ENCODE measurements at regions of chr14 and their contacts with region 1.

Region 1: DNA sequence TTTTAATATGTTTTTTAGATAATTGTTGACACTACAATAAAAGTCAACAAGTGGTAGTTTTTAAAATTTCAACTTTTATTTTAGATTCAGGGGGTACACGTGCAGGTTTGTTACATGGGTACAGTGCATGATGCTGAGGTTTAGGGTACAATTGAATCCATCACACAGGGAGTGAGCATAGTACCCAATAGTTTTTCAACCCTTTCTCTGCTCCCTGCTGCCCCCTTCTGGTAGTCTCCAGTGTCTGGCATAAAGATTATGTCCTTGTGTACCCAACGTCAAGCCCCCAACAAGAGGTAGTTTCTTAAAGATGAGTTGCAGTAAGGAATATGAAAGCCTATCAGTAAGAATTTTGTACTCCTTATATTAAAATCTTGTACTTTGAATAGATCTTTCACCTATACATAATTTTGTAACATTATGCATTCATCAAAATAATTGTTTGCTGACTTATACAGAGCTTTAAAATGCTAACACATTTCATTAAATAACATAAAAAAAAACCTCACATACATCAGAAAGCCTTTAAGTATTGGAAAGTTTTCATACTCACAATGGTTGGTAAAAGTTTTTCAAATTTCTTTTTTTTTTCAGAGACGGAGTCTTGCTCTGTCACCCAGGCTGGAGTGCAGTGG is 5.4 kb upstream of the RALGAPA1 start:
- DNase-seq: peak; percentile 85
- ATAC-seq: peak; percentile 89
- H3K4me3 Mint-ChIP-seq: no peak overlapping the region
- H3K27ac Mint-ChIP-seq: no peak overlapping the region
- H3K4me1 Mint-ChIP-seq: no peaks in the 10 kb centered on the region
- H3K27me3 Mint-ChIP-seq: peaks cover 3% of the 10 kb centered on the region

Region 2: DNA sequence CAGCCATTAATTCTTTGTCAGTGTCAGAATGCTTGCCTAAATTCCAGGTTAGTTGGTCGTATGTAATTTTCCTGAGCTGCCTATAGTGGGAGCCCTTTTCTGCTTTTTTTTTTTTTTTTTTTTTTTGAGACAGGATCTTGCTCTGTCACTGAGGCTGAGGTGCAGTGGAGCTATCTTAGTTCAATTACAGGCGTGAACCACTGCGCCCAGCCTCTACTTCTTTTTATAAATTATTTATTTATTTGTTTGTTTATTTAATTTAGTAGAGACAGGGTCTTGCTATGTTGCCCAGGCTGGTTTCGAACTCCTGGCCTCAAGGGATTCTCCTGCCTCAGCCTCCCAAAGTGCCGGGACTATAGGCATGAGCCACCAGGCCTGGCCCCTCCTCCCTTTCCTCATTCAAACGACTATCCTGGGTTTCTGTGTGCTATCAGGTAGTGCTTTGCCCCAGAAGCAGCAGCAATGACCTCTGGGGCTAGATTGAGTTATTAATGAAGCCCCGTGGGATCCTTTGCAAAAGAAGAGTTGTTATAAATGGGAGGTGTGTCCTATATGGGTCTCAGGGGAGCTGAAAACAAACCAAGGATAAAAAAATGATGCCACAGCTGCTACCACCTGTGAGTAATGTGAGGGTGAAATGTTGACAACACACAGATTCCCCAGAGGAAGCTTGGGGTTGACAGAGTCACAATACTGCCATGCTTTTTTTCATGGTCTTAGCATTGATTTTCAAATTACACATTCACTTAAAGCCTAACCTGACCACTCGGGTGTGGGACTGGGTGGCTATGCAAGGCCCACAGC is 375.4 kb before region 1 on chr14:
- CTCF ChIA-PET with region 1: interaction called, 20 read pairs
- DNase-seq: no peak
- ATAC-seq: no peak
- H3K4me3 Mint-ChIP-seq: no peak overlapping the region
- H3K27ac Mint-ChIP-seq: no peak overlapping the region
- H3K4me1 Mint-ChIP-seq: peaks cover 8% of the 10 kb centered on the region
- H3K27me3 Mint-ChIP-seq: peaks cover 4% of the 10 kb centered on the region

Region 3: GRCh38 chr14:35789651-35790050 is 24.8 kb before region 1 on chr14:
- CTCF ChIA-PET with region 1: no interaction called
- DNase-seq: peak; percentile 42
- ATAC-seq: no peak
- H3K4me3 Mint-ChIP-seq: no peak overlapping the region
- H3K27ac Mint-ChIP-seq: no peak overlapping the region
- H3K4me1 Mint-ChIP-seq: peaks cover 14% of the 10 kb centered on the region
- H3K27me3 Mint-ChIP-seq: no peaks in the 10 kb centered on the region

Region 4: GRCh38 chr14:35826218-35826951 is 11.9 kb after region 1 on chr14 and contains the start of gene BRMS1L:
- CTCF ChIA-PET with region 1: interaction called, 29 read pairs
- DNase-seq: peak; percentile 99
- ATAC-seq: peak; percentile 98
- H3K4me3 Mint-ChIP-seq: peak within 1 kb of the TSS; percentile 83
- H3K27ac Mint-ChIP-seq: peak within 1 kb of the TSS; percentile 82
- H3K4me1 Mint-ChIP-seq: peaks cover 29% of the 10 kb centered on the region
- H3K27me3 Mint-ChIP-seq: no peaks in the 10 kb centered on the region
- total RNA-seq, gene BRMS1L: 4.0 to 5.3 TPM

Region 5: GRCh38 chr14:36021030-36021422 is 206.5 kb after region 1 on chr14:
- CTCF ChIA-PET with region 1: no interaction called
- DNase-seq: no peak
- ATAC-seq: no peak
- H3K4me3 Mint-ChIP-seq: no peak overlapping the region
- H3K27ac Mint-ChIP-seq: peak overlapping the region; percentile 13
- H3K4me1 Mint-ChIP-seq: peaks cover 23% of the 10 kb centered on the region
- H3K27me3 Mint-ChIP-seq: peaks cover 2% of the 10 kb centered on the region

Measured in activated CD8-positive, alpha-beta memory T cell treated with anti-CD3 and anti-CD28 coated beads, Interleukin-2, amount 10 ng/mL, durations not matched to agents 7 days and 5 days (primary cell).